GM12878 (cell line): ENCODE measurements at regions of chr1 and their contacts with region 1.

Region 1: DNA sequence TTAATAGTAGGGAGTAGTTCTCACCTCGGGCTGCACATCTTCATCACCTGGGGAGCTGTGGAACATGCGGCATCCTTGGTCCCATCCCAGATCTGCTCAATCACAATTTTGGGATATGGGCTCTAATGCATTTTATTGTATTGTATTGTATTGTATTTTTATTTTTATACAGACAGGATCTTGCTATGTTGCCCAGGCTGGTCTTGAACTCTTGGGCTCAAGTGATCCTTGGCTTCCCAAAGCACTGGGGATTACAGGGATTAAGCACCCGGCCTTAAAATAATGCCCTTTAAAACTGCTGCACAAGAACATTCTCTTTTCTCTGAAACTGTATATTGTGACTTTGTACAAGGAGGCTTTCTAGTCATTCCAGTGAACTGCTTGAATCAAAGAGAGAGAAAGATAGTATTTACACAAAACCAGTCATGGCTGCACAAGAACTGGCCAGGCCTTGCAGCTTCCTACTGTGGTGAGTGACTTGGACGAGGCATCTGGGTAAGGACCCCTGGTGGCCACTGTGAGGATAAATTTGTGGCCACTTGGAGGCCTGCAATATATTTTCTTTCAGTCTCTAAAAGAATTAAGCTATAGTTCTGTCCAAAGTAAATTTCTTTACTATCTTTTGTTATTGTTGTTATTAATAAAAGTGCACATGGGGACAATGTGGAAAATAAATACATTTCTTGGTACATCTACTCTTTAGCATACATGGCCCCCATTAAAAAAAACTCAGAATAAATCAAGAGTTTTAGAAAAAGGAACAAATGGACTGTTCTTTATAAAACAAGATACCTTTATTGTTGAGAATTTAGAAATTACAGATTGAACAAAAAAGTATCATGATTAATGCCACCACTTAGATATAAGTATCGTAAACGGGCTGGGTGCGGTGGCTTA is 48.0 kb downstream of the TBCE start:
- DNase-seq: peak; percentile 15
- ATAC-seq: peak; percentile 97
- H3K4me3 ChIP-seq: no peak overlapping the region
- H3K27ac ChIP-seq: no peak overlapping the region
- H3K4me1 ChIP-seq: no peaks in the 10 kb centered on the region
- H3K27me3 ChIP-seq: no peaks in the 10 kb centered on the region
- CTCF ChIP-seq: peak; percentile 78 to 81 (median 80)
- EP300 ChIP-seq: no peak
- POLR2A ChIP-seq: no peak
- RAD21 ChIP-seq: peak; percentile 73

Region 2: DNA sequence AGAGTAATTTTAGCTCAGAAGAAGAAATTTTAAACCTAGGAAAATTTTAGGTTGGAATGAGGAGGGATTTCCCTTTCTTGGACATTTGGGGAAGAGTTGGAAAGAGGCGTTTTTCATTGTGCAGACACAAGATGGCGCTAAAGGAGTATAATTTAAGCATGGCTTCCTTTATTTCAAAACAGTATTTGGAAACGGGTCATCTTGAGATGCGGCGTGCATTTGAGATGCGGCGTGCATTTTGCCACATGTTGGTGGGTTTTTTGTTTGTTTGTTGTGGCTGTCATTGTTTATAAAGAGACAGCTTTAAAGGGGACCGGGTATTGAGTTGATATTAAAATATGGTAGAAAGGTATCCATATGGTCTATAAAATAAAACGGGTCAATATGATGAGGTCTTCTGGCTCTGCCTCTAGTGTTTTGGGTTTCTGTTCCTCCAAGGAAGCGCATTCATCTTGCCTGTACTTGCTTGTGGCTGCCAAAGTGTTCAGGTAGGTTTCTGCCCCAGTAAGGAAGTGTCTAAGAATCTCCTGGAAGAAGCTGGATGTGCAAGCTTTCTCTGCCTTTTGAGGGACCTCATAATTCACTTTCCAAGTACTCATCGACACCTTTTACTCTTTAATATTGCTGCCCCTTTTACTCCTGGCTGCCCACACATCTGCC is 1300.5 kb before region 1 on chr1:
- CTCF ChIA-PET with region 1: no interaction called
- POLR2A ChIA-PET with region 1: no interaction called
- RAD21 ChIA-PET with region 1: no interaction called
- SMC1A ChIA-PET with region 1: interaction called, 5 read pairs
- in situ Hi-C with region 1: no loop called
- intact Hi-C with region 1: loop called (anchors 10 kb)
- DNase-seq: peak; percentile 4
- ATAC-seq: peak; percentile 77
- H3K4me3 ChIP-seq: no peak overlapping the region
- H3K27ac ChIP-seq: no peak overlapping the region
- H3K4me1 ChIP-seq: no peaks in the 10 kb centered on the region
- H3K27me3 ChIP-seq: peaks cover 0 to 3% of the 10 kb centered on the region in 2 experiments; a peak in 1 of 4 replicates
- CTCF ChIP-seq: peak; percentile 60 to 74 (median 60); a peak in 5 of 6 replicates
- EP300 ChIP-seq: no peak
- POLR2A ChIP-seq: no peak
- RAD21 ChIP-seq: peak; percentile 72

Region 3: GRCh38 chr1:235105051-235106043 is 309.9 kb before region 1 on chr1:
- CTCF ChIA-PET with region 1: interaction called, 61 read pairs
- POLR2A ChIA-PET with region 1: interaction called, 3 read pairs
- RAD21 ChIA-PET with region 1: interaction called, 24 read pairs
- SMC1A ChIA-PET with region 1: interaction called, 46 read pairs
- in situ Hi-C with region 1: loop called (anchors 5 kb)
- intact Hi-C with region 1: loop called (anchors 2 kb)
- DNase-seq: peak; percentile 86
- ATAC-seq: peak; percentile 87
- H3K4me3 ChIP-seq: peak overlapping the region; percentile 60; the same call in 1 of the 2 replicates
- H3K27ac ChIP-seq: peak overlapping the region; percentile 43
- H3K4me1 ChIP-seq: peaks cover 17% of the 10 kb centered on the region
- H3K27me3 ChIP-seq: no peaks in the 10 kb centered on the region
- CTCF ChIP-seq: no peak
- EP300 ChIP-seq: peak in 1 of 2 experiments; percentile 28; a peak in 1 of 4 replicates
- POLR2A ChIP-seq: no peak
- RAD21 ChIP-seq: no peak

Region 4: GRCh38 chr1:235176486-235176885 is 238.8 kb before region 1 on chr1:
- CTCF ChIA-PET with region 1: interaction called, 6 read pairs
- POLR2A ChIA-PET with region 1: no interaction called
- RAD21 ChIA-PET with region 1: interaction called, 3 read pairs
- SMC1A ChIA-PET with region 1: interaction called, 3 read pairs
- in situ Hi-C with region 1: no loop called
- intact Hi-C with region 1: loop called (anchors 5 kb)
- DNase-seq: no peak
- ATAC-seq: no peak
- H3K4me3 ChIP-seq: no peak overlapping the region
- H3K27ac ChIP-seq: no peak overlapping the region
- H3K4me1 ChIP-seq: no peaks in the 10 kb centered on the region
- H3K27me3 ChIP-seq: no peaks in the 10 kb centered on the region
- CTCF ChIP-seq: no peak
- EP300 ChIP-seq: no peak
- POLR2A ChIP-seq: no peak
- RAD21 ChIP-seq: no peak

Region 5: GRCh38 chr1:235225299-235225698 is 190.0 kb before region 1 on chr1:
- CTCF ChIA-PET with region 1: interaction called, 34 read pairs
- POLR2A ChIA-PET with region 1: no interaction called
- RAD21 ChIA-PET with region 1: interaction called, 8 read pairs
- SMC1A ChIA-PET with region 1: interaction called, 9 read pairs
- in situ Hi-C with region 1: no loop called
- intact Hi-C with region 1: no loop called
- DNase-seq: no peak
- ATAC-seq: no peak
- H3K4me3 ChIP-seq: no peak overlapping the region
- H3K27ac ChIP-seq: no peak overlapping the region
- H3K4me1 ChIP-seq: no peaks in the 10 kb centered on the region
- H3K27me3 ChIP-seq: no peaks in the 10 kb centered on the region
- CTCF ChIP-seq: no peak
- EP300 ChIP-seq: no peak
- POLR2A ChIP-seq: no peak
- RAD21 ChIP-seq: no peak

Region 6: GRCh38 chr1:235259133-235259778 is 156.0 kb before region 1 on chr1:
- CTCF ChIA-PET with region 1: interaction called, 91 read pairs
- POLR2A ChIA-PET with region 1: no interaction called
- RAD21 ChIA-PET with region 1: interaction called, 14 read pairs
- SMC1A ChIA-PET with region 1: interaction called, 37 read pairs
- in situ Hi-C with region 1: no loop called
- intact Hi-C with region 1: no loop called
- DNase-seq: peak; percentile 38
- ATAC-seq: peak; percentile 90
- H3K4me3 ChIP-seq: no peak overlapping the region
- H3K27ac ChIP-seq: peak overlapping the region; percentile 74
- H3K4me1 ChIP-seq: peaks cover 14% of the 10 kb centered on the region
- H3K27me3 ChIP-seq: no peaks in the 10 kb centered on the region
- CTCF ChIP-seq: no peak
- EP300 ChIP-seq: no peak
- POLR2A ChIP-seq: no peak
- RAD21 ChIP-seq: peak; percentile 28; the same call in 1 of the 2 replicates

Region 7: DNA sequence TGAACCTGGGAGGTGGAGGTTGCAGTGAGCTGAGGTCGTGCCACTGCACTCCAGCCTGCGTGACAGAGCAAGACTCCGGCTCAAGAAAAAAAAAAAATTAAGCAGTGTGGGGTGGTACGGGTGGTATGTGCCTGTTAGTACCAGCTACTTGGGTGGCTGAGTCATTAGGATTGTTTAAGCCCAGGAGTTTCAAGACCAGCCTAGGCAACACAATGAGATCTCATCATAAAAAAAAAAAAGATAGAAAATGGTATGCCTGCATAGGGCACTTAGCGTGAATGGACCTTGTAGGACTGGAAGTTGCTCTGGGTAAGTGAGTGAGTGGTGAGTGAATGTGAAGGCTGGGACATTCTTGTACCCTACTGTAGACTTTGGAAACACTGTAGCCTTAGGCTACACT is 11.1 kb before region 1 on chr1:
- CTCF ChIA-PET with region 1: interaction called, 14 read pairs
- POLR2A ChIA-PET with region 1: interaction called, 3 read pairs
- RAD21 ChIA-PET with region 1: interaction called, 5 read pairs
- SMC1A ChIA-PET with region 1: interaction called, 5 read pairs
- in situ Hi-C with region 1: no loop called
- intact Hi-C with region 1: no loop called
- DNase-seq: no peak
- ATAC-seq: no peak
- H3K4me3 ChIP-seq: no peak overlapping the region
- H3K27ac ChIP-seq: no peak overlapping the region
- H3K4me1 ChIP-seq: no peaks in the 10 kb centered on the region
- H3K27me3 ChIP-seq: no peaks in the 10 kb centered on the region
- CTCF ChIP-seq: no peak
- EP300 ChIP-seq: no peak
- POLR2A ChIP-seq: no peak
- RAD21 ChIP-seq: no peak